PC-9 (cell line): ENCODE measurements at regions of chr10 and their contacts with region 1.

Region 1: GRCh38 chr10:12644380-12645144 is 295.2 kb downstream of the CAMK1D start:
- DNase-seq: no peak
- H3K4me3 ChIP-seq: no peak overlapping the region
- H3K27ac ChIP-seq: no peak overlapping the region
- H3K4me1 ChIP-seq: no peaks in the 10 kb centered on the region
- H3K27me3 ChIP-seq: no peaks in the 10 kb centered on the region
- CTCF ChIP-seq: no peak

Region 2: GRCh38 chr10:12376211-12376610 is 268.4 kb before region 1 on chr10:
- CTCF ChIA-PET with region 1: interaction called, 12 read pairs
- POLR2A ChIA-PET with region 1: no interaction called
- intact Hi-C with region 1: no loop called
- DNase-seq: no peak
- H3K4me3 ChIP-seq: no peak overlapping the region
- H3K27ac ChIP-seq: no peak overlapping the region
- H3K4me1 ChIP-seq: no peaks in the 10 kb centered on the region
- H3K27me3 ChIP-seq: no peaks in the 10 kb centered on the region
- CTCF ChIP-seq: no peak

Region 3: GRCh38 chr10:12434277-12434676 is 210.3 kb before region 1 on chr10:
- CTCF ChIA-PET with region 1: no interaction called
- POLR2A ChIA-PET with region 1: interaction called, 26 read pairs
- intact Hi-C with region 1: no loop called
- DNase-seq: no peak
- H3K4me3 ChIP-seq: no peak overlapping the region
- H3K27ac ChIP-seq: peak overlapping the region; percentile 70
- H3K4me1 ChIP-seq: peaks cover 33% of the 10 kb centered on the region
- H3K27me3 ChIP-seq: no peaks in the 10 kb centered on the region
- CTCF ChIP-seq: no peak